ENCODE measurements at regions of chr9 and their contacts with region 1.

Region 1: GRCh38 chr9:132507746-132508469 is 74.5 kb upstream of the BARHL1 start:
- DNase-seq: peak; percentile 29
- H3K4me3 ChIP-seq: no peak overlapping the region
- H3K27ac ChIP-seq: no peak overlapping the region
- H3K4me1 ChIP-seq: no peaks in the 10 kb centered on the region
- H3K27me3 ChIP-seq: peaks cover 3% of the 10 kb centered on the region
- CTCF ChIP-seq: peak; percentile 75 to 81

Region 2: GRCh38 chr9:131969469-131969989 is 538.4 kb before region 1 on chr9:
- CTCF ChIA-PET with region 1: no interaction called
- dilution Hi-C with region 1: no loop called
- in situ Hi-C with region 1: no loop called
- intact Hi-C with region 1: no loop called
- DNase-seq: no peak
- H3K4me3 ChIP-seq: no peak overlapping the region
- H3K27ac ChIP-seq: no peak overlapping the region
- H3K4me1 ChIP-seq: no peaks in the 10 kb centered on the region
- H3K27me3 ChIP-seq: no peaks in the 10 kb centered on the region
- CTCF ChIP-seq: no peak

Region 3: DNA sequence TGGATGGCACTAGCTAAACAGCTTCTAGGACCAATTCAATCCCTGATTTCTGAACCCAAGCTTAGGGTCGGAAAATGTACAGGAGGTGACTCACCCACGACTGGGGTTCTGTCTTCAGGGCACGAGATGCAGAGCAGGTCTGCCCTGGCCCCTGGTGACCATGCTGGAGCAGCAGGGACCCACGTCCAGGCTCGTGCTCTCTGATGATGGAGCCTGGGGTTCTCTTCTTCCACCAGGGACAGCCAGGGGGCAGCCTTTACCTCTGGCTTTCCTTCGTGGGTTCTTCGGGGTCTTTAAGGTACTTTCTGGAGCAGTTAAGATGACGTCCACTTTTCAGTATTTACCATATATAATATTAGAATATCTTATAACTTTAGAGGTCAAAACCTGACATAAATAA is 95.8 kb before region 1 on chr9:
- CTCF ChIA-PET with region 1: no interaction called
- dilution Hi-C with region 1: loop called (anchors 5 kb)
- in situ Hi-C with region 1: no loop called
- intact Hi-C with region 1: loop called (anchors 2 kb)
- DNase-seq: peak; percentile 9
- H3K4me3 ChIP-seq: no peak overlapping the region
- H3K27ac ChIP-seq: no peak overlapping the region
- H3K4me1 ChIP-seq: peaks cover 22% of the 10 kb centered on the region
- H3K27me3 ChIP-seq: peaks cover 3% of the 10 kb centered on the region
- CTCF ChIP-seq: peak; percentile 46 to 62

Region 4: GRCh38 chr9:132575005-132575609 is 67.2 kb after region 1 on chr9:
- CTCF ChIA-PET with region 1: no interaction called
- dilution Hi-C with region 1: no loop called
- in situ Hi-C with region 1: no loop called
- intact Hi-C with region 1: loop called (anchors 1 kb)
- DNase-seq: peak; percentile 57
- H3K4me3 ChIP-seq: no peak overlapping the region
- H3K27ac ChIP-seq: no peak overlapping the region
- H3K4me1 ChIP-seq: no peaks in the 10 kb centered on the region
- H3K27me3 ChIP-seq: peaks cover 19% of the 10 kb centered on the region
- CTCF ChIP-seq: peak; percentile 65 to 83

Region 5: GRCh38 chr9:132651254-132651653 is 143.3 kb after region 1 on chr9:
- CTCF ChIA-PET with region 1: no interaction called
- dilution Hi-C with region 1: no loop called
- in situ Hi-C with region 1: no loop called
- intact Hi-C with region 1: loop called (anchors 1 kb)
- DNase-seq: peak; percentile 86
- H3K4me3 ChIP-seq: no peak overlapping the region
- H3K27ac ChIP-seq: peak overlapping the region; percentile 7
- H3K4me1 ChIP-seq: peaks cover 38% of the 10 kb centered on the region
- H3K27me3 ChIP-seq: no peaks in the 10 kb centered on the region
- CTCF ChIP-seq: peak; percentile 64 to 72

Region 6: GRCh38 chr9:132901856-132902831 is 394.2 kb after region 1 on chr9:
- CTCF ChIA-PET with region 1: no interaction called
- dilution Hi-C with region 1: no loop called
- in situ Hi-C with region 1: no loop called
- intact Hi-C with region 1: loop called (anchors 5 kb)
- DNase-seq: peak; percentile 75
- H3K4me3 ChIP-seq: no peak overlapping the region
- H3K27ac ChIP-seq: no peak overlapping the region
- H3K4me1 ChIP-seq: no peaks in the 10 kb centered on the region
- H3K27me3 ChIP-seq: no peaks in the 10 kb centered on the region
- CTCF ChIP-seq: peak; percentile 93 to 99

Region 7: GRCh38 chr9:132973713-132974112 is 465.8 kb after region 1 on chr9:
- CTCF ChIA-PET with region 1: no interaction called
- dilution Hi-C with region 1: no loop called
- in situ Hi-C with region 1: no loop called
- intact Hi-C with region 1: loop called (anchors 2 kb)
- DNase-seq: no peak
- H3K4me3 ChIP-seq: no peak overlapping the region
- H3K27ac ChIP-seq: no peak overlapping the region
- H3K4me1 ChIP-seq: peaks cover 4% of the 10 kb centered on the region
- H3K27me3 ChIP-seq: peaks cover 2% of the 10 kb centered on the region
- CTCF ChIP-seq: no peak